Ovary (tissue), 10 donors: ENCODE measurements at regions of chr1 and their contacts with region 1.

Region 1: DNA sequence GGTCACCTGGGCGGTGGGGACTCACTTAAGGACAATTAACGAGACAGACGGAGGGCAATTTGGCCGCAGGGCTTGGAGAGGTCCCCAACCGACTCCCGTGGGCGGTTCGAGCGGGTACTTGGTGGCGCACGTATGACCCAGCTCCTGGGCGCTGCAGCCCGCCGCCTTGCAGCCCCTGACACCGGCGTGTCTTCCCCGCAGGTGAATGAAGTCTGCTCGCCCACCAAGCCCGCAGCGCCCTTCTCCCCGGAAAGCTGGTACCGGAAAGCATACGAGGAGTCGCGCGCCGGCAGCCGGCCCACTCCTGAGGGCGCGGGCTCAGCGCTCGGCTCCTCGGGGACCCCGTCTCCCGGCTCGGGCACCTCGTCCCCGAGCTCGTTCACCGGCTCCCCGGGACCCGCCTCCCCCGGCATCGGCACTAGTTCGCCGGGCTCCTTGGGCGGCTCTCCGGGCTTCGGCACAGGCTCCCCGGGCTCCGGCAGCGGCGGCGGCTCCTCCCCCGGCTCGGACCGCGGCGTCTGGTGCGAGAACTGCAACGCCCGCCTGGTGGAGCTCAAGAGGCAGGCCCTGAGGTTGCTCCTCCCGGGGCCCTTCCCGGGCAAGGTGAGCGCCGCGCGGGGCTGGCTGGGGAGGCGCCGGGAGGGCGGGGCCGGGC is 1.4 kb downstream of the KIF26B start:
- DNase-seq: peak; percentile 45 to 85 (median 64)
- H3K4me3 ChIP-seq: peak overlapping the region; percentile 42
- H3K27ac ChIP-seq: no peak overlapping the region
- H3K4me1 ChIP-seq: peaks cover 12% of the 10 kb centered on the region
- H3K27me3 ChIP-seq: no peaks in the 10 kb centered on the region
- CTCF ChIP-seq: peak in 1 of 3 donors; percentile 45
- EP300 ChIP-seq: no peak
- POLR2A ChIP-seq: no peak

Region 2: DNA sequence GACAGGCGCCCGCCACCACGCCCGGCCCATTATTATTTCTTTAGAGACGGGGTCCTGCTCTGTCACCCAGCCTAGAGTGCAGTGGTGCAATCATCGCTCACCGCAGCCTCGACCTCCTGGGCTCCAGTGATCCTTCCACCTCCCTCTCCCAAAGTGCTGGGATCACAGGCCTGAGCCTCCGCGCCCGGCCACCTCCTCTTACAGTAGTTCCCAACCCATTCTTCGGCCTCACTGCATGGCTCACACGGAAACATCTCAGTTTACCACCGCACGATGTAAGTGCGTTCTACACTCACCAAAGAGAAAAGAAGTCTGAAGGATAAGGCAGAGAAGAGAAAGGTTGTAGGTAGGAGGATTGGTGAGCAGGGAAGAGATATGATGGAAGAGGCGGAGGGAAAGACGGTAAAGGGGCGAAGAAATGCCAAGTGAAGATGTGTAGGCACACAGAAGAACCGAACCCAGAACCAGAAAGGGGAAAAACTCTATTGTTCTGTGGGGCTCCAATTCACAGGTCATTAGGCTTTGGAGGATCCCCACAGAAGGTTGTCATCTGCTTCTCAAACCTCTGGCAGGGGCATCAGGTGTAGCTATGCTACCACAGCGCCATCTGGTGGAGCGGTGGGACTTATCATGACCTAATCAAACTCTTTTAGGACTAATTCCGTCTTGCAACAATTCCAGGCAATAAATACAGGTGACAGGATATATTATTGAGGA is 846.7 kb after region 1 on chr1:
- intact Hi-C with region 1: loop called in 3 of 4 experiments (anchors 5 to 10 kb)
- DNase-seq: peak; percentile 71 to 89 (median 81)
- H3K4me3 ChIP-seq: no peak overlapping the region
- H3K27ac ChIP-seq: no peak overlapping the region
- H3K4me1 ChIP-seq: no peaks in the 10 kb centered on the region
- H3K27me3 ChIP-seq: no peaks in the 10 kb centered on the region
- CTCF ChIP-seq: peak; percentile 32 to 68 (median 65)
- EP300 ChIP-seq: no peak
- POLR2A ChIP-seq: no peak

Region 3: DNA sequence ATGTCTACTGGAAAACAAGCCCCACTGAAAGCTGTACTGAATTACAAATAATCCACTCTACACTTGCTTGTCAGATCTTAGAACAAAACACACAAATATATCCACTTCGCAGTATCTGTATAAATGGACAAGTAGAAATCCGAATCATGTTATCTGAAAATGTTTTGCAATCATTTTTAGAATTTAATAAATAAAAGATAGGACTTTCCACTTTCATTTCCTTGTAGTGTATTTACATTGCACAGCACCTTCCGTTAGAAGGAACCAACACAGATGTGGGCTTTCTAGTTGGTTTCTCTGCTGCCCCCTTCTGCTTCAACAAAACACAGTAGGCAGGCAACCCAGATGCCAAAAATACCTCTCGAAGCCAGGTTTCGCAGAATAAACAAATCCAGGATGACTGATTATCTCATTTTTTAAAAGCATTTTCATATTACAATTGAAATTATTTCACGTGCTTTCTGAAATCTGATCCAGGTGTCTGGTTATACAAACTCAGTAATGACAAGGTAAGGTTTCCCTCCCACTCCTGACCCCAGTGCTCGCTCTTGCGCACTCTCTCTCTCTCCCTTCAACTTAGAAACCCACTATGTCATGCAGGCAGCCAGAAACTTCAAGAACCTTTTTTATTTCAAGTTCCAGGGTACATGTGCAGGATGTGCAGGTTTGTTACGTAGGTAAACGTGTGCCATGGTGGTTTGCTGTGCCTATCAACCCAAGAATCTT is 961.0 kb after region 1 on chr1:
- intact Hi-C with region 1: loop called in 1 of 4 experiments (anchors 10 kb)
- DNase-seq: no peak
- H3K4me3 ChIP-seq: no peak overlapping the region
- H3K27ac ChIP-seq: no peak overlapping the region
- H3K4me1 ChIP-seq: peaks cover 1% of the 10 kb centered on the region
- H3K27me3 ChIP-seq: no peaks in the 10 kb centered on the region
- CTCF ChIP-seq: peak in 1 of 3 donors; percentile 24
- EP300 ChIP-seq: no peak
- POLR2A ChIP-seq: no peak

Region 4: GRCh38 chr1:246447501-246447900 is 1291.3 kb after region 1 on chr1:
- intact Hi-C with region 1: loop called in 1 of 4 experiments (anchors 10 kb)
- DNase-seq: no peak
- H3K4me3 ChIP-seq: no peak overlapping the region
- H3K27ac ChIP-seq: no peak overlapping the region
- H3K4me1 ChIP-seq: no peaks in the 10 kb centered on the region
- H3K27me3 ChIP-seq: no peaks in the 10 kb centered on the region
- CTCF ChIP-seq: no peak
- EP300 ChIP-seq: no peak
- POLR2A ChIP-seq: no peak

Region 5: DNA sequence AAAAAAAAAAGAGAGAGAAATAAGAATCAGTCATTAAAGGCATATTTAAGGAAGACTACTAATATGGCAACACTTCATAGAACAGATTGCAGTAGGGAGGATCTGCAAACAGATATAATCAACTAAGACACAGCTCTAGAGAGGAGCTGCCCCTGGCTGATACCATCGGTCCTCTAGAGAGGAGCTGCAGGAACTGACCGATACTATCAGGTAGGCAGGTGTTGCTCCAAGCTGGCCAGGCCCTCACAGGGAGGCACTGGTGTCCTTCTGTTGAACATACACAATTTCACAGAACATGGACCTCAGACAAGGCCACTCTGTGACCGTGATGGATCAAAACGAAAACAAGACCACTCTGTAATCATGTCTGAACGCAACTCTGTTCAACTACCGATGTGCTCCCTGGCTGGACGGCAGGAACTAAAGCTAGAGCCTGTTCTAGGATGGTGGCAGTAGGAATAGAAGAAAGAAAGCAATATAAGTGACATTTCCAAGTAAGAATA is 1335.4 kb after region 1 on chr1:
- intact Hi-C with region 1: loop called in 3 of 4 experiments (anchors 2 to 5 kb)
- DNase-seq: no peak
- H3K4me3 ChIP-seq: no peak overlapping the region
- H3K27ac ChIP-seq: no peak overlapping the region
- H3K4me1 ChIP-seq: no peaks in the 10 kb centered on the region
- H3K27me3 ChIP-seq: no peaks in the 10 kb centered on the region
- CTCF ChIP-seq: no peak
- EP300 ChIP-seq: no peak
- POLR2A ChIP-seq: no peak

Region 6: GRCh38 chr1:246497331-246497915 is 1341.2 kb after region 1 on chr1:
- intact Hi-C with region 1: loop called in 2 of 4 experiments (anchors 5 kb)
- DNase-seq: no peak
- H3K4me3 ChIP-seq: no peak overlapping the region
- H3K27ac ChIP-seq: no peak overlapping the region
- H3K4me1 ChIP-seq: no peaks in the 10 kb centered on the region
- H3K27me3 ChIP-seq: no peaks in the 10 kb centered on the region
- CTCF ChIP-seq: peak; percentile 31 to 56 (median 44)
- EP300 ChIP-seq: no peak
- POLR2A ChIP-seq: no peak